ENCODE measurements at regions of chr7 and their contacts with region 1.

Region 1: GRCh38 chr7:105352018-105352612 is 36.6 kb downstream of the SRPK2 start:
- DNase-seq: peak in 9 of 10 donors; percentile 42 to 85 (median 66)
- ATAC-seq: peak; percentile 96 to 99
- H3K4me3 Mint-ChIP-seq: peak overlapping the region; percentile 57 to 86 (median 78)
- H3K27ac Mint-ChIP-seq: peak overlapping the region; percentile 86 to 98 (median 93)
- H3K4me1 Mint-ChIP-seq: peaks cover 36 to 91% (median 62%) of the 10 kb centered on the region in 4 donors
- H3K27me3 Mint-ChIP-seq: no peaks in the 10 kb centered on the region

Region 2: GRCh38 chr7:104983578-104984539 is 368.3 kb before region 1 on chr7:
- POLR2A ChIA-PET with region 1: interaction called, 10 read pairs
- DNase-seq: peak; percentile 71 to 90 (median 80)
- ATAC-seq: peak; percentile 85 to 88
- H3K4me3 Mint-ChIP-seq: peak overlapping the region; percentile 96 to 100 (median 100)
- H3K27ac Mint-ChIP-seq: peak overlapping the region in 9 of 10 donors; percentile 99 to 100 (median 100)
- H3K4me1 Mint-ChIP-seq: peaks cover 19 to 73% (median 54%) of the 10 kb centered on the region in 4 donors
- H3K27me3 Mint-ChIP-seq: peaks cover 0 to 1% (median 0%) of the 10 kb centered on the region in 5 donors

Region 3: DNA sequence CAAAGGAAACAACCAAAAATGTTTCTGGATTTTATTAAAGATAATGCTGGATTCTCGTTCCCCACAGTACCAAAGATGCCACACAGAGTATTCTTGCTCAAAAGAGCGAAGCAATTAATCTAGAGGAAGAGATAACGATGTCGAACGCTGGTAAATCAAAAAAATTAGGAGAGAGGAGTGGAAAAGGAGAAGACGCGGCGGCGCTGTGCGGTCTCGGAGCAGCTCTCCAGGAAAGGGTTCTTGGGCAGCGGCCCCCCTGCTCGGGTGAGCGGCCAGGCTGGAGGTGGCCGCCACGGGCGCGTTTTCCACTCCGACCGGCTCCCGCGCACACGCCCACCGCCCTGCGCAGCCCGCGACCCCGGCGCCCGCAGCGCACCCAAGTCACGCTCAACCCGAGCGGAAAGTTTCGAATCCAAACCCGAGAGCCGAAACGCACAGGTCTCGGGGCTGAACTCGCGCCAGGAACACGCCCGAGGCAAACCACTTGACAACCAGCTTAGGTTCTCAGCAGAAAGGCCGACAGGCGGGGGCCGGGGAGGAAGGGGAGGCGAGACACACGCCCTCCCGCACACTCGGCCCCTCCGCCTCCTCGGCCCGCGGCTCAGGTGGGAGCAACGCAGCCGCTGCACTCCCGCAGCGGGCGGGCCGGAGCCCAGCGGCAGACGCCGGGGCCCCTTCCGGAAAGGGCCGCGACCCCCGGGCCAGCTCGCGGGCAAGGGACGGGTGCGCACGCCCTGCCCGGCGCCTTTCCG is 35.7 kb after region 1 on chr7:
- POLR2A ChIA-PET with region 1: interaction called, 21 read pairs
- DNase-seq: peak; percentile 20 to 70 (median 42)
- ATAC-seq: peak; percentile 41 to 49
- H3K4me3 Mint-ChIP-seq: peak overlapping the region; percentile 82 to 98 (median 94)
- H3K27ac Mint-ChIP-seq: peak overlapping the region; percentile 43 to 95 (median 85)
- H3K4me1 Mint-ChIP-seq: peaks cover 20 to 40% (median 34%) of the 10 kb centered on the region in 4 donors
- H3K27me3 Mint-ChIP-seq: no peaks in the 10 kb centered on the region

Region 4: DNA sequence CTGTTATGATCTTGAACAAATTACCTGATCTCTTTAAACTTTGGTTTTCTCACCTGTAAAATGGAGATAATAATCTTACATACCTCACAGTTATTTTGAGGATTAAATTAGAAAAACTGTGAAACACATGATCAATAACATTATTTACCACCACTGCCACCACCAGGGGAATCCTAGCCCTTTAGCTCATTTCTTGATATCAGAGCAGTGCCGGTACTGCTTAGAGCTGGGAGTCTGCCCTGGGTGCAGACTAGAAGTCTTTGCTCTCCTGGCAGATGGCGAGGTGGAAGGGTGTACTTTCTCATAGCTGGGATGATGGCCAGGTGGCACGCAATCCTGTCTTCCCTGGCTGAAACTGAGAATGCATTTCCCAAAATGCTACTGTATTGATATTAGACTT is 241.9 kb after region 1 on chr7:
- POLR2A ChIA-PET with region 1: no interaction called
- DNase-seq: no peak
- ATAC-seq: no peak
- H3K4me3 Mint-ChIP-seq: no peak overlapping the region
- H3K27ac Mint-ChIP-seq: peak overlapping the region in 1 of 10 donors; percentile 59
- H3K4me1 Mint-ChIP-seq: peaks cover 2 to 6% (median 4%) of the 10 kb centered on the region in 4 donors
- H3K27me3 Mint-ChIP-seq: peaks cover 0 to 4% (median 2%) of the 10 kb centered on the region in 5 donors

Measured in naive thymus-derived CD8-positive, alpha-beta T cell (primary cell).